CD4-positive, alpha-beta T cell (primary cell): ENCODE measurements at regions of chr11 and their contacts with region 1.

Region 1: GRCh38 chr11:114400217-114400914 is at the starts of genes C11orf71 and RBM7:
- DNase-seq: peak; percentile 95 to 100 (median 98)
- ATAC-seq: peak; percentile 91
- H3K4me3 ChIP-seq: peak within 1 kb of the TSS; percentile 92
- H3K4me3 Mint-ChIP-seq: peak within 1 kb of the TSS; percentile 99
- H3K27ac ChIP-seq: peak within 1 kb of the TSS; percentile 93 to 96
- H3K27ac Mint-ChIP-seq: peak within 1 kb of the TSS; percentile 100
- H3K4me1 ChIP-seq: peaks cover 9% of the 10 kb centered on the region
- H3K4me1 Mint-ChIP-seq: peaks cover 63% of the 10 kb centered on the region
- H3K27me3 ChIP-seq: no peaks in the 10 kb centered on the region
- H3K27me3 Mint-ChIP-seq: no peaks in the 10 kb centered on the region
- CTCF ChIP-seq: peak; percentile 28
- total RNA-seq, gene C11orf71: 6.1 to 7.6 TPM
- total RNA-seq, gene RBM7: 76.1 to 81.9 TPM

Region 2: DNA sequence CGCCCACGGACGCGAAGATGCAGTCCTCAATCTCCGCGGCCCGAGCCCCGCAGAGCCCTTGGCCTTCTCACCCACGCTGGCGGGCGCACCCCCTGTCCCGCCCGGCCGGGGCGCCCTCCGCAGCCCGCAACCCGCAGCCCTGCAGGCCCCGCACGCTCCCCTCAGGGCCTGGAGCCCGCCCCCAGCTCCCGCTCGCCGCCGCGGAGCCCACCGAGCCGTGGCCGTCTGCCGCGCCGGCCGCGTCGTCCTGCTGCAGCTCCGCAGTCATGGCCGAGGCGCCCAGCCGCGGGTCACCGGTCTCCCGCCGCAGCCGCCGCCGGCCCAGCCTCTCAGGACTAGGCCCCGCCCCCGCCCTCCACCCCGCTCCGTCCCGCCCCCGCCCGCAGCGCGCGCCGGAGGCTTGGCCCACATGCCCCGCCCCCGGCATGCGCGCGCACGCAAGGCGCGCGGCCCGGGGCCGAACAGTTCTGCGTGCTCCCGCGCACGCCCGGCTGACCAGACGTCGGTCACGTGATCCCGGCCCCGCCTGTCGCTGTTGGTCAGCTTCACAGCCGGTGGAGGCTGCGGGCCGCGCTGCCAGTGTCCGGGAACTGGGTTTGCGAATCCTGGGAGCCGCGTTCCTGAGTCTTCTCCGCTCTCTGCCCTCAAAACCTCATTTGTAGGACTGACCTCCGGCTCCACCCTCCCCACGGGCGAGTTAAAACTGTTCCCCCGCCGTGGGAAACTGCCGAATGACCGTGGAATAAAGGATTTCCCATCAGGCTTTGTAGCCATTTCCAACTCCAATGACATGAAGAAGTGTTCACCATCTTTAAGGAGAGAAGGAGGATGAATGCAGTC is 524.9 kb before region 1 on chr11 and contains the start of gene USP28:
- CTCF ChIA-PET with region 1: no interaction called
- POLR2A ChIA-PET with region 1: no interaction called
- intact Hi-C with region 1: loop called in 1 of 2 experiments (anchors 2 kb)
- DNase-seq: peak; percentile 47 to 92 (median 72)
- ATAC-seq: peak; percentile 84
- H3K4me3 ChIP-seq: peak within 1 kb of the TSS; percentile 89
- H3K4me3 Mint-ChIP-seq: peak within 1 kb of the TSS; percentile 100
- H3K27ac ChIP-seq: peak within 1 kb of the TSS; percentile 65 to 80
- H3K27ac Mint-ChIP-seq: peak within 1 kb of the TSS; percentile 91
- H3K4me1 ChIP-seq: peaks cover 19% of the 10 kb centered on the region
- H3K4me1 Mint-ChIP-seq: peaks cover 54% of the 10 kb centered on the region
- H3K27me3 ChIP-seq: no peaks in the 10 kb centered on the region
- H3K27me3 Mint-ChIP-seq: no peaks in the 10 kb centered on the region
- CTCF ChIP-seq: no peak
- total RNA-seq, gene USP28: 7.9 to 9.4 TPM

Region 3: GRCh38 chr11:114059278-114059983 is 340.9 kb before region 1 on chr11 and contains the start of gene ZBTB16:
- CTCF ChIA-PET with region 1: interaction called, 3 read pairs
- POLR2A ChIA-PET with region 1: interaction called, 3 read pairs
- intact Hi-C with region 1: loop called in 1 of 2 experiments (anchors 10 kb)
- DNase-seq: peak; percentile 34 to 84 (median 56)
- ATAC-seq: peak; percentile 73
- H3K4me3 ChIP-seq: peak within 1 kb of the TSS; percentile 67
- H3K4me3 Mint-ChIP-seq: peak within 1 kb of the TSS; percentile 95
- H3K27ac ChIP-seq: peak within 1 kb of the TSS in 1 of 2 donors; percentile 21
- H3K27ac Mint-ChIP-seq: peak within 1 kb of the TSS; percentile 64
- H3K4me1 ChIP-seq: peaks cover 33% of the 10 kb centered on the region
- H3K4me1 Mint-ChIP-seq: peaks cover 9% of the 10 kb centered on the region
- H3K27me3 ChIP-seq: peaks cover 25 to 28% of the 10 kb centered on the region in 2 experiments
- H3K27me3 Mint-ChIP-seq: peaks cover 51% of the 10 kb centered on the region
- CTCF ChIP-seq: peak; percentile 23
- total RNA-seq, gene ZBTB16: 19.1 to 20.6 TPM

Region 4: GRCh38 chr11:114348200-114349191 is 51.9 kb before region 1 on chr11:
- CTCF ChIA-PET with region 1: no interaction called
- POLR2A ChIA-PET with region 1: interaction called, 4 read pairs
- intact Hi-C with region 1: loop called in 1 of 2 experiments (anchors 5 kb)
- DNase-seq: peak in 7 of 14 experiments; percentile 8 to 72 (median 51)
- ATAC-seq: no peak
- H3K4me3 ChIP-seq: no peak overlapping the region
- H3K4me3 Mint-ChIP-seq: peak overlapping the region; percentile 51
- H3K27ac ChIP-seq: no peak overlapping the region
- H3K27ac Mint-ChIP-seq: no peak overlapping the region
- H3K4me1 ChIP-seq: no peaks in the 10 kb centered on the region
- H3K4me1 Mint-ChIP-seq: peaks cover 6% of the 10 kb centered on the region
- H3K27me3 ChIP-seq: no peaks in the 10 kb centered on the region
- H3K27me3 Mint-ChIP-seq: no peaks in the 10 kb centered on the region
- CTCF ChIP-seq: peak; percentile 56

Region 5: DNA sequence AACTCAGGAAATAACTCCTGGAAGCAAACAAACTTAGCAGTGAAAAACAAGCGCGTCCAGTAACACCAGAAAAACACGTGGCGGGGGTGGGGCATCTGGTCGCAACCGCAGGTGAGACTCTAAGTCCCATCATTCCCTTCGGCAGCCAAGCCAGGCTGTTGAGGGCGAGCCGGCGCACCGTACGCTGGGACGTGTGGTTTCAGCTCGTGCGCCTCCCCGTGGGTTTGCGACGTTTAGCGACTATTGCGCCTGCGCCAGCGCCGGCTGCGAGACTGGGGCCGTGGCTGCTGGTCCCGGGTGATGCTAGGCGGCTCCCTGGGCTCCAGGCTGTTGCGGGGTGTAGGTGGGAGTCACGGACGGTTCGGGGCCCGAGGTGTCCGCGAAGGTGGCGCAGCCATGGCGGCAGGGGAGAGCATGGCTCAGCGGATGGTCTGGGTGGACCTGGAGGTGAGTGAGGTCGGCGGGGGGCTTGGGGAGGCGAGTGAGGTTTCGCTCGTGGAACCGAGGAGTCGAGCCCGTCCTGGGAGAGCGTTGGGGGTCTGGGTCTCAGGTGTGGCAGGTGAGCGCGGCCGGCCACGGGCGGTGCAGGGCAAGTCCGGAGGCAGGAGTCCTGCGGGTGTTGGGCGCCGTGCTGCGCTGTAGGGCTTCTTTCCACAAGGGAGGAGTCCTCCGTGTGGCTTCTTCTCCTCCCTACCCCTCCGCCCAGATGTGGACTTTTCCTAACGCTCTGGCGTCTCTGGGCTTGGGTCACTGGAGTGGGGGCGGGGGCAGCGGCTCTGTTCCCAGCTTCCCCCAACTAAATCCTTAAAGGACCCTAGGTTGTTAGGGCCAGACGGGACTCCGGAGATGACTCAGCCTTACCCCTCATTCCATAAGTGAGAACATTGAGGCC is 39.1 kb after region 1 on chr11 and contains the start of gene REXO2:
- CTCF ChIA-PET with region 1: interaction called, 3 read pairs
- POLR2A ChIA-PET with region 1: interaction called, 22 read pairs
- intact Hi-C with region 1: loop called (anchors 1 kb)
- DNase-seq: peak; percentile 89 to 98 (median 93)
- ATAC-seq: peak; percentile 99
- H3K4me3 ChIP-seq: peak within 1 kb of the TSS; percentile 100
- H3K4me3 Mint-ChIP-seq: peak within 1 kb of the TSS; percentile 98
- H3K27ac ChIP-seq: peak within 1 kb of the TSS; percentile 35 to 49
- H3K27ac Mint-ChIP-seq: peak within 1 kb of the TSS; percentile 89
- H3K4me1 ChIP-seq: peaks cover 16% of the 10 kb centered on the region
- H3K4me1 Mint-ChIP-seq: peaks cover 36% of the 10 kb centered on the region
- H3K27me3 ChIP-seq: no peaks in the 10 kb centered on the region
- H3K27me3 Mint-ChIP-seq: no peaks in the 10 kb centered on the region
- CTCF ChIP-seq: peak; percentile 16
- total RNA-seq, gene REXO2: 17.3 to 20.6 TPM